Testis (tissue), 5 donors: ENCODE measurements at regions of chr11 and their contacts with region 1.

Region 1: GRCh38 chr11:130131961-130132850 is 27.4 kb upstream of the ST14 start:
- DNase-seq: peak; percentile 39
- H3K4me3 ChIP-seq: no peak overlapping the region
- H3K27ac ChIP-seq: no peak overlapping the region
- H3K4me1 ChIP-seq: no peaks in the 10 kb centered on the region
- H3K27me3 ChIP-seq: no peaks in the 10 kb centered on the region
- CTCF ChIP-seq: peak; percentile 51 to 71 (median 65)
- POLR2A ChIP-seq: no peak

Region 2: GRCh38 chr11:129922674-129923073 is 209.5 kb before region 1 on chr11:
- intact Hi-C with region 1: loop called (anchors 5 kb)
- DNase-seq: no peak
- H3K4me3 ChIP-seq: no peak overlapping the region
- H3K27ac ChIP-seq: no peak overlapping the region
- H3K4me1 ChIP-seq: no peaks in the 10 kb centered on the region
- H3K27me3 ChIP-seq: no peaks in the 10 kb centered on the region
- CTCF ChIP-seq: no peak
- POLR2A ChIP-seq: no peak